ENCODE measurements at regions of chr1 and their contacts with region 1.

Region 1: GRCh38 chr1:203267347-203267846 is 37.9 kb upstream of the BTG2 start:
- H3K4me3 ChIP-seq: peak overlapping the region; percentile 58
- H3K27ac ChIP-seq: no peak overlapping the region; the same call in 1 of the 2 replicates
- H3K4me1 ChIP-seq: no peaks in the 10 kb centered on the region
- CTCF ChIP-seq: peak; percentile 72

Region 2: DNA sequence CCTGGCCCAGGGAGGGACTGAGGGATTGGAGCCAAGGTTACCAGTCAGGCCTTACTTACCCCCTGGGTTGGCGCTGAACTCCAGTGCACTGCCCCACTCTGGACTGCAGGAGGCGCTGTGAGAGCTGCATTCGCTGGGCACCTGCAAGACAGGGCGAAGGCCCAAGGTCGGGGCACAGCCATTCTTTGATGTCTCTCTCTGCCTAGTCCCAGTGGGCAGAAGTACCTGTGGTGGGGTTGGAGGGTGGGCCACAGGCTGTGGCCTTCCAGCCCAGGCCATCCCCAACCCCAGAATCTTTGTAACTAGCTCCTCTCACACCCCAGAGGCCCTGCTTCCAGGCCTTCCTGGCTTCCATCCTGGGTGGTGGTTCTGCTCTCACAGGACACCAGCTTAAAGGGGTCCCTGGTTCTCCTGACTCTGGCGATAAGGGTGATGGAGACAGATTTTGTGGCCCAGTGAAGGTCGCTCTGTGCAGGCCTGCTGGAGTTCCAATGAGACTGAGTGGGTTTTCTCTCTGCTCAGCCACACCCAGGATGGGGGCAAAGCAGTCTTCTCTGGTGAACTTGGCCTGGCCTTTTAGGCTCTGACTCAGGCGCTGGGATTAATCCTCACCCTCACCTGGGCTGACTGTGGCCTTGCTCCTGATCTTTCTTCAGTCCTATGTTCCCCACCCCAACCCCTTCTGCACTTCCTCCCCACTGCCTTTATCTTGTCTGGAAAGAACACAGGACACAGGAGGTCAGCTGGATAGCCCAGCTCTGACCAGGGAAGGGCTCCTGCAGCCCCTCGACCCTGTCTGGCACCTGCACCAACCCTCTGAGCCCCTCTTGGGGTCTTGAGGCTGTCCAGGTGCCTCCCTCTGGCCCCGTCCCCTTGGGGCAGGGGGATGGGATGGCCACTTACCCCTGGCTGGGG is 182.6 kb before region 1 on chr1:
- CTCF ChIA-PET with region 1: interaction called, 12 read pairs
- POLR2A ChIA-PET with region 1: no interaction called
- H3K4me3 ChIP-seq: no peak overlapping the region
- H3K27ac ChIP-seq: no peak overlapping the region
- H3K4me1 ChIP-seq: no peaks in the 10 kb centered on the region
- CTCF ChIP-seq: no peak; the same call in 1 of the 2 replicates

Region 3: GRCh38 chr1:203224716-203225470 is 42.5 kb before region 1 on chr1:
- CTCF ChIA-PET with region 1: interaction called, 11 read pairs
- POLR2A ChIA-PET with region 1: no interaction called
- H3K4me3 ChIP-seq: no peak overlapping the region
- H3K27ac ChIP-seq: no peak overlapping the region
- H3K4me1 ChIP-seq: no peaks in the 10 kb centered on the region
- CTCF ChIP-seq: no peak

Region 4: DNA sequence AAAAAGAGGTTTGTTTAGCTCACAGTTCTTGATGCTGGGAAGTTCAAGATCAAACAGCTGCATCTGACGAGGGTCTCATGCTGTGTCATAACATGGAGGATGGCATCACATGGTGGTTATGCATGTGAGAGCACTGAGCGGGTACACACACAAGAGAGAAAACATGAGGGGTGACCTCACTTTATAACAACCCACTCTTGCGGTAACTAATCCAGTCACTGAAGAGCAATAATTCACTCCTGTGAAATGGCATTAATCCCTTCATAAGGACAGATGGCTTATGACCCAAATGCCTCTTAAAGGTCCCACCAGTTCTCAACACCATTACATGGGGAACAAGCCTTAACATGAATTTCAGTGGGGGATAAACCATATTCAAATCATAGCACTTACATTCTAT is 14.7 kb before region 1 on chr1:
- CTCF ChIA-PET with region 1: interaction called, 21 read pairs
- POLR2A ChIA-PET with region 1: no interaction called
- H3K4me3 ChIP-seq: no peak overlapping the region
- H3K27ac ChIP-seq: no peak overlapping the region
- H3K4me1 ChIP-seq: no peaks in the 10 kb centered on the region
- CTCF ChIP-seq: no peak

Region 5: GRCh38 chr1:203326830-203327683 is 59.7 kb after region 1 on chr1:
- CTCF ChIA-PET with region 1: interaction called, 371 read pairs
- POLR2A ChIA-PET with region 1: interaction called, 4 read pairs
- H3K4me3 ChIP-seq: peak overlapping the region; percentile 38
- H3K27ac ChIP-seq: peak overlapping the region; percentile 88
- H3K4me1 ChIP-seq: peaks cover 38% of the 10 kb centered on the region
- CTCF ChIP-seq: no peak

Region 6: DNA sequence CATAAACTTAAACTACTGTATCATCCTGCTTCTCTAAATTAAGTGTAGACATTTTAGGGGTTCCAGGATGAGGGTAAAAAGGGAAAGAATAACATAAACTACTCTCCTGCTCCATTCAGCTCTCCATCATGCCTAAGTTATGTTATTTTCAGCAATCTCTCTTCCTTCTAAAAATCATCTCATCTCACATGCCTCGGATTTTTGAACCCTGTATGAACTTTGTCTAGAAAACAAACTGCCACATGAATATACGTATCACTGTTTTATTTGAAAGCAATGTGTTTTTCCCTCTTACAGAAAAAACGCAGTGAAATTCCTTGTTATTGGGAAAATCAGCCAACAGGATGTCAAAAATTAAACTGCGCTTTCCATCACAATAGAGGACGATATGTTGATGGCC is 560.6 kb after region 1 on chr1:
- CTCF ChIA-PET with region 1: no interaction called
- POLR2A ChIA-PET with region 1: no interaction called
- H3K4me3 ChIP-seq: no peak overlapping the region
- H3K27ac ChIP-seq: no peak overlapping the region
- H3K4me1 ChIP-seq: no peaks in the 10 kb centered on the region
- CTCF ChIP-seq: no peak

Region 7: DNA sequence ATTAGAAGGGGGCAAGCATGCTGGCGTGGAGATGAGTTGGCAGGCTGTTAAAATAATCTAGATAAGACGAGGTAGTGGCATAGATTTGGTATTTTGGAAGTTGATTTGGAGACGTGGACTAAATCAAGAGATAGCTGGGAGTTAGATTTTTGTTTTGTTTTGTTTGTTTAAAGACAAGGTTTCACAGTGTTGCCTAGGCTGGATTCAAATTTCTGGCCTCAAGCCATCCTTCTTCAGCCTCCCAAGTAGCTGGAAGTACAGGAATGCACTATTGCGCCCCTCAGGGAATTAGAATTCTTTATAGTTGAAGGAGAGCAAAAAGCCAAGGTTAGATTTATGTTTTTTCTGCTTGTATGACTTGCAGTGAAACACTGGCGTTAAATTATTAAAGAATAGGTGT is 571.7 kb after region 1 on chr1:
- CTCF ChIA-PET with region 1: no interaction called
- POLR2A ChIA-PET with region 1: no interaction called
- H3K4me3 ChIP-seq: no peak overlapping the region
- H3K27ac ChIP-seq: no peak overlapping the region
- H3K4me1 ChIP-seq: no peaks in the 10 kb centered on the region
- CTCF ChIP-seq: no peak

Measured in HEK293 (cell line).